Ascending aorta (tissue), 2 donors: ENCODE measurements at regions of chr10 and their contacts with region 1.

Region 1: GRCh38 chr10:89301721-89302445 is at the start of gene IFIT2:
- DNase-seq: no peak
- H3K4me3 ChIP-seq: peak within 1 kb of the TSS; percentile 46 to 66
- H3K27ac ChIP-seq: peak within 1 kb of the TSS; percentile 87 to 90
- H3K4me1 ChIP-seq: peaks cover 4 to 16% of the 10 kb centered on the region in 2 donors
- H3K27me3 ChIP-seq: no peaks in the 10 kb centered on the region
- CTCF ChIP-seq: no peak
- total RNA-seq, gene IFIT2: 0.85 TPM

Region 2: GRCh38 chr10:89283936-89284475 is 17.9 kb before region 1 on chr10:
- intact Hi-C with region 1: loop called (anchors 1 kb)
- DNase-seq: peak; percentile 31 to 87
- H3K4me3 ChIP-seq: peak overlapping the region; percentile 38 to 50
- H3K27ac ChIP-seq: peak overlapping the region; percentile 89 to 95
- H3K4me1 ChIP-seq: peaks cover 0 to 43% of the 10 kb centered on the region in 2 donors
- H3K27me3 ChIP-seq: no peaks in the 10 kb centered on the region
- CTCF ChIP-seq: no peak